ENCODE measurements at regions of chr18 and their contacts with region 1.

Region 1: DNA sequence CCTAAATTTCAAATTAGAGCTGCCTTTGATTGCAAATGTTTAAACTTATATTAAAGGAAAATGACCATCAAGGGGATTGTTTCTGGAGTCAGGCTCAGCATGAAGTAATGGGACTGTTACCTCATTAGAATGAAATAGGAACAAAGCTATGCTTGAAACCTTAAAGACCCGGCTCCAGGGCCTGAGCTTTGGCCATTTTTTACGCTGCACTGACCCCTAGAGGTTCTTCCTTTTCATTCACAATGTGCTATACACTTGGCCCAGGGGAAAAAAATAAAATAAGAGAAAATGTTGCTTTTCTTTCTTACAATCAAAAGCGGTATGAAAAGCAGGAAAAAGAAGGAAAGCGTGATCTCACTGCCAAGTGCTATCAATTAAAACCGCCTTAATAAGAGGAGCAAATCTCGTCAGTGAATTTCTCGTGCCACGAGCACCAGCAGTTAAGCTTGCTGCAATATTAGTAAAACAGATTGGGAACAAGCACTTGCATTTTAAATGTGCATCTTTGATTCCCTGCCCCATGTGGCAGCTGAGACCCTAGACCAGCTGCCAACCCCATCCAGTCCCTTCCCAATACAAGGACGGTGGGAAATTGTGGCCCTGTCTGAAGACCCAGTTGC is 96.6 kb downstream of the MBD2 start:
- DNase-seq: no peak
- H3K4me3 Mint-ChIP-seq: no peak overlapping the region
- H3K27ac Mint-ChIP-seq: no peak overlapping the region
- H3K4me1 Mint-ChIP-seq: peaks cover 45% of the 10 kb centered on the region
- H3K27me3 Mint-ChIP-seq: no peaks in the 10 kb centered on the region

Region 2: GRCh38 chr18:53567929-53568574 is 559.8 kb before region 1 on chr18:
- intact Hi-C with region 1: loop called (anchors 1 kb)
- DNase-seq: no peak
- H3K4me3 Mint-ChIP-seq: no peak overlapping the region
- H3K27ac Mint-ChIP-seq: no peak overlapping the region
- H3K4me1 Mint-ChIP-seq: no peaks in the 10 kb centered on the region
- H3K27me3 Mint-ChIP-seq: no peaks in the 10 kb centered on the region

Region 3: GRCh38 chr18:53874103-53874502 is 253.8 kb before region 1 on chr18:
- intact Hi-C with region 1: no loop called
- DNase-seq: no peak
- H3K4me3 Mint-ChIP-seq: no peak overlapping the region
- H3K27ac Mint-ChIP-seq: no peak overlapping the region
- H3K4me1 Mint-ChIP-seq: no peaks in the 10 kb centered on the region
- H3K27me3 Mint-ChIP-seq: no peaks in the 10 kb centered on the region

Measured in activated T-helper 1 cell treated with anti-CD3 and anti-CD28 coated beads, Interleukin-12 subunit alpha, Interleukin-12 subunit beta, Interleukin-2, Interleukin-4 antibody, amounts not matched to agents 30 ng/mL and 10 ng/mL and 1 ng/mL, durations not matched to agents 14 hours and 24 hours and 36 hours (primary cell).